ENCODE measurements at regions of chr16 and their contacts with region 1.

Region 1: GRCh38 chr16:10918294-10919002 is 23.8 kb downstream of the DEXI start:
- DNase-seq: peak; percentile 74 to 96 (median 89)
- H3K4me3 ChIP-seq: peak overlapping the region in 50 of 59 donors; percentile 4 to 62 (median 41)
- H3K27ac ChIP-seq: peak overlapping the region in 10 of 59 donors; percentile 11 to 72 (median 28)
- H3K27me3 ChIP-seq: no peaks in the 10 kb centered on the region
- CTCF ChIP-seq: peak; percentile 62 to 98 (median 94)

Region 2: DNA sequence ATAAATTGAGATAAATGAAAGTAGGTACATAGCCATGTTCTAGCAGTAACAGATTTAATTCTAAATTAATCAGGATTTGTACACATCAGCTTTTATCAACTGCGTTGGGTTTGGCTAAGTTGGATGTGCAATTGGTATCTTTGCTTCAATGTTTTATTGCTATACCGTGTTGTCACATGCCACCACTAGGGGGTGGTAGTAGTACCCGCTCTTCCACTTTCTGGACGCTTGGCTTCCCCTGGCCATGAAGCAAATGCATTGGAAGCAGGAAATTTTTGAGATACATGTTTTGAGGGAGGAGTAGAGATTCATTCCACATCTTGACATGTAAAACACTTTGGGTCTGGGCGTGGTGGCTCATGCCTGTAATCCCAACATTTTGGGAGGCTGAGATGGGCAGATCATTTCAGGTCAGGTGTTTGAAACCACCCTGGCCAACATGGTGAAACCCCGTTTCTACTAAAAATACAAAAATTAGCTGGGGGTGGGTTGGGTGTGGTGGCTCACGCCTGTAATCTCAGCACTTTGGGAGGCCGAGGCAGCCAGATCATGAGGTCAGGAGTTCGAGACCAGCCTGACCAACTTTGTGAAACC is 396.7 kb before region 1 on chr16:
- intact Hi-C with region 1: loop called in 1 of 2 experiments (anchors 5 kb)
- DNase-seq: peak in 6 of 10 donors; percentile 31 to 73 (median 52)
- H3K4me3 ChIP-seq: no peak overlapping the region
- H3K27ac ChIP-seq: no peak overlapping the region
- H3K27me3 ChIP-seq: no peaks in the 10 kb centered on the region
- CTCF ChIP-seq: peak; percentile 30 to 99 (median 82)

Region 3: DNA sequence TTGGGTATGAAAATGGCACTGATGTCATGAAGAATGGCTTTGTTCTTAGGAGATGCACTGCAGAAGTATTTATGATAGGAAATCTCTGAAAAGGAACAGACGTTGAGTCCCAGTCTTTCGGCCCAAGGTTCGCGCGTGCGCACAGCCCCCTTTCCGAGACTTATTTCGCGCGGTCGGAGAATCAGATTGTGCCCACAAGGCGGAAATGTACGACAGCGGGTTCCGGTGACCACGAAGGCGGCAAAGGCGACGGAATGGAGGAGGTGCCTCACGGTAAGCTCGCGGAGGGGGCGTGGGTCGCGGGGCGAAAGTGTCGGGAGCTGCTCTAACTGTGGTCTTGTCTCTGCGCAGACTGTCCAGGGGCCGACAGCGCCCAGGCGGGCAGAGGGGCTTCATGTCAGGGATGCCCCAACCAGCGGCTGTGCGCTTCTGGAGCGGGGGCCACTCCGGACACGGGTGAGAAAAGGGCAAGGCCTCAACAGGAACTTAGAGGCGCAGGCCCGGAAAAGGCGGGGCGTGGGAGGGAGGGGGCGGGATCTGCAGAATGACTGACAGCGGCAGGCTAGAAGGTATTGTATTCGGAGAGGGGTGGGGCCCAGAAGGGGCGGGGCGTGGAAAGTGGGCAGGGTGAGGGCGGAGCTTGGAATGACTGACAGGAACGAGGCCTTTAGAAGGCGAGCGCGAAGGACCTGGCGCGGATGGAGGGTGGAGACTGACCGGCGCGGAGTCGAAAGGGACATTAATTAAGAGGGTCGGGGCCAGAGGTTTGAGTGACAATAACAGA is 174.6 kb before region 1 on chr16 and contains the start of gene NUBP1:
- intact Hi-C with region 1: loop called (anchors 5 kb)
- DNase-seq: peak; percentile 98 to 100 (median 100)
- H3K4me3 ChIP-seq: peak within 1 kb of the TSS; percentile 35 to 95 (median 74)
- H3K27ac ChIP-seq: peak within 1 kb of the TSS; percentile 79 to 99 (median 96)
- H3K27me3 ChIP-seq: no peaks in the 10 kb centered on the region
- CTCF ChIP-seq: peak in 16 of 56 donors; percentile 3 to 50 (median 15)
- total RNA-seq, gene NUBP1: 8.5 to 25.0 (median 14.3) TPM

Region 4: GRCh38 chr16:11004351-11004750 is 85.9 kb after region 1 on chr16:
- intact Hi-C with region 1: no loop called
- DNase-seq: no peak
- H3K4me3 ChIP-seq: no peak overlapping the region
- H3K27ac ChIP-seq: no peak overlapping the region
- H3K27me3 ChIP-seq: no peaks in the 10 kb centered on the region
- CTCF ChIP-seq: no peak

Measured in dorsolateral prefrontal cortex (tissue), 120 donors.